ENCODE measurements at regions of chr5 and their contacts with region 1.

Region 1: DNA sequence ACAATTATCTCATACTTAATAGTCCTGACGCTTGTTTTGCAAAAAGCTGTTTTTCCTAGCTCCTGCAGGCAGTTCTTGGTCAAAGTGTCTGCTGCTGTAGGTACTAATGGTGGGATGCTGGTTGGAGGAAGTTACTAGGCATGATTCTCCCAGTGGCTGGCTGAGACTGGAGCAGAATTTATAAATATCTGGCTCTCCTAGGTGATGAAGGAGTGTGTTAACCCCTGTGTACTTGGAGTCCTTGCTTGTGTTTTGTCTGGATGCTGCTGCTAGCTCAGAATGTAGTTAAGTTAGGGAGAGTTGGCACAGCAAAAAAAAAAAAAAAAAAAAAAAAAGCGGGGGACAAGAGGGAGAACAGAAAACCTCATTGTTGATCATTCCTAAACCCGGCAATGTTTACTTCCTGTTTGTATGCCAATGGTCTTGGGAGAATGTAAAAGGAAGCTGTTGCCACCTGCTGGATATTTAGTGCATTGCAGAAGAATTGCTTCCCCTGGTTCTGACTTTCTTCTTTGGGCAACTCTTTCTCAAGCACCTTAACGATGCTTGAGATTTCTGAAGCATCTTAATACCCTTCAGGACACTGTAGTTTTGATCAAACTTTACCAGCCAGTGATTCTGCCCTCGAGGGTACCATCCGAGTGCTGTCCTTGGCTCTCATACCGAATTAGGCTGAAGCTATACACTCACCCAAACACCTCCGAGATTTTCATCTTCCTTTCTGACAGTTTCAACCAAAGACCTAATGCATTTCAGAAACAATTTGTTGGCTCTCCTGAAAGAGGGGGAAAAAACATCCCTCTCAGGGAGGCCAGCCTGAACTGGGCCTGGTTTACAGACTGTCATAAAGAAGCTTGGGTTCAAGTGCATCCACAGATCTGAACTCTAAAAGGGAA is 71.7 kb upstream of the WWC1 start:
- DNase-seq: peak; percentile 81
- CTCF ChIP-seq: peak; percentile 87

Region 2: GRCh38 chr5:167699434-167699833 is 520.3 kb before region 1 on chr5:
- in situ Hi-C with region 1: no loop called
- DNase-seq: no peak
- CTCF ChIP-seq: no peak

Region 3: DNA sequence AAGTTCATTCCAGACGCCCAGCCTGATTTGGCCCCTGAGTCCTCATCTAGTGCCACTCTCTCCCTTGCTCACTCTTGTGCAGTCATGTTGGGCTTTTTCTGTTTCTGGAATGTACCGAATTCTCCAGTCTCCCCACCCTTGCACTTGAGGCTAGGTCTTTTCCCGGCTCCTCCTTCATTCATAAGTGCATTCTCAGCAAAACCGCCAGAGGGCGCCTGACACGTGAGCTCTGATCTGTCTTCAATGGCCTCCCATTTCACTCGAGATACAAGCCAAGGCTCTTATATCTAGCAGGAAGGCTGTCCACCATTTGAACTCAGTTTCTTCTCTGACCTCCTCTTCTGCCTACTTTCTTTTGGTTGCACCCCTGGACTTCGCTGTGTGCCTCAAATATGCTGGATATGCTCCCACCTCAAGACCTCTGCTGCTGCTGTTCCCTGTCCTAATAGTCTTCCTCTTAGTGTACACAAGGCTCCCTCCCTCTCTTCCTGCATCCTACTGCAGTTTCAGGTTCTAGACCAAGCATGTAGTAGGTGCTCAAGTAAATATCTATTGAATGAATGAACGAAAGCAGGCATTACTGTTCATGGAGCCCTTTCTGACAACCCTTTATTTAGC is 496.4 kb before region 1 on chr5:
- in situ Hi-C with region 1: loop called (anchors 10 kb)
- DNase-seq: peak; percentile 72
- CTCF ChIP-seq: peak; percentile 73

Region 4: GRCh38 chr5:168114444-168115017 is 105.2 kb before region 1 on chr5:
- in situ Hi-C with region 1: loop called (anchors 5 kb)
- DNase-seq: peak; percentile 67
- CTCF ChIP-seq: peak; percentile 81